Posterior vena cava (tissue), 2 donors: ENCODE measurements at regions of chr6 and their contacts with region 1.

Region 1: GRCh38 chr6:3835055-3835731 is 14.0 kb upstream of the FAM50B start:
- DNase-seq: peak; percentile 90

Region 2: GRCh38 chr6:4870821-4871494 is 1035.8 kb after region 1 on chr6:
- intact Hi-C with region 1: loop called in 1 of 2 experiments (anchors 5 kb)
- DNase-seq: no peak

Region 3: GRCh38 chr6:5053038-5053437 is 1217.8 kb after region 1 on chr6:
- intact Hi-C with region 1: no loop called
- DNase-seq: no peak